Right ventricle myocardium inferior (tissue), 1 donor: ENCODE measurements at regions of chr1 and their contacts with region 1.

Region 1: DNA sequence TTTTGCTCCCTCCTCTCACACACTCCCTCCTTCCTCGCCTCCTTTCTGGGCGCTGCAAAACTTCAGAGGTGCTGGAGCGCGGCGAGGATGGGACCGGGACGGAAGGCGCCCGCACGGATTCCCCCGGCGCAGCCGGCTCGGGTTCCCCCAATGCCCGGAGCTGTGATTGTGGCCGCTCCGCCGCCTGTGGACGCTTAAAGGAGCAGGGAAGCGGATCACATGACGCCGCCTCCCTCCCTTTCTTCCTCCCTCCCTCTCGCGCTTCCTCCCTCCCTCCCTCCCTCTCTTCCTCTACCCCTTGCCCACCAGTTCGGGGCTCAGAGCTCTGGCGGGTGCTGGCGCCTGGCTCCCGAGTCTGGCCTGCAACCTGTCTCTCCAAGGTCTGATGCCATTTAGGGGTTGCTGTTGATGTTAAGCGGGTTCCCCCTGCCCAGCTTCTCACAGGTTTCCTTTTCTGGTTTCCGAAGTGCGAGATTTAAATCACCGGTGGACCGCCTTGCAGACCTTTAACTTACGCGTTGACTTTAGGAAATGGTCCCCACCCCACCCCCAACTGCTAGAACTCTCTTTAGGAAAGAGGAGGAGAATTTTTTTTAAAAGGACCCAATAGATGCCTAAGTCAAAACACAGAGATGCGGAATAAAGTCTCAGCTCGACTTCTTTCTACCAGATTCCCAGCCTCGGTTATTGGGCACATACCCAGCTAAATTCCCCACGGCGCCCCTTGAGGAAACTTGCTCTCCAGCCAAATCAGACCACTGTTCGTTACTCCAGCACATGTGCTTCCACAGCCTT is at the start of gene WLS:
- DNase-seq: peak; percentile 92
- ATAC-seq: peak; percentile 91
- total RNA-seq, gene WLS: 97.2 TPM

Region 2: DNA sequence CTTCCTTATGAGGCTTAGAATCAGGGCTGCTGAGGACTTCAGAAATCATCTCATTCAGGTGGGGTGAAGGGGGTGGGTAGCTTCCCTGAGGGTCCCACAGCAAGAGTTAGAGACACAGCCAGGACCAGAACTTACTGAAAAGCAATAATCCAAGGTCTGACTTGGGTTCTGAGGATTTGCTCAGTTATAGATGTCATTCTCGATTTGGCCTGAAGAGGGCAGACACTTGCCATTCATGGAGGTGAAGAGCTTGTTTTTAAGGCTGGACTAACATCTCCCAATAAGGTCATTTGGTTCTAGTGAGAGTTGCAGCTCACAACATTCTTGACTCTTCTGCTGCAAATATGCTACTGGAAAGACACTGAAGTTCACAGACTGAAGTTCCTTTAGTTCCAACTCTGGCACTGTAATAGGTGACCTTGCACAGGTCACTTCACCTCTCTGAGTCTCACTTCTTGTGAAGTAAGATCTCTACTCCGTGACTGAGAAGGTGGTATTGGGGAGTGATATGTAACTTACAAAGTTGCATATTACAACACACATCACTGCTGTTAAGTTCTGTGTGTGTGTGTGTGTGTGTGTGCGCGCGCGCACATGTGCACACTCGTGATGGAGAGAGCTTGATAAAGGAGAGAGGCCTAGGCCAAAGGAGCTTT is 112.3 kb before region 1 on chr1:
- intact Hi-C with region 1: loop called (anchors 5 kb)
- DNase-seq: no peak
- ATAC-seq: peak; percentile 40

Region 3: DNA sequence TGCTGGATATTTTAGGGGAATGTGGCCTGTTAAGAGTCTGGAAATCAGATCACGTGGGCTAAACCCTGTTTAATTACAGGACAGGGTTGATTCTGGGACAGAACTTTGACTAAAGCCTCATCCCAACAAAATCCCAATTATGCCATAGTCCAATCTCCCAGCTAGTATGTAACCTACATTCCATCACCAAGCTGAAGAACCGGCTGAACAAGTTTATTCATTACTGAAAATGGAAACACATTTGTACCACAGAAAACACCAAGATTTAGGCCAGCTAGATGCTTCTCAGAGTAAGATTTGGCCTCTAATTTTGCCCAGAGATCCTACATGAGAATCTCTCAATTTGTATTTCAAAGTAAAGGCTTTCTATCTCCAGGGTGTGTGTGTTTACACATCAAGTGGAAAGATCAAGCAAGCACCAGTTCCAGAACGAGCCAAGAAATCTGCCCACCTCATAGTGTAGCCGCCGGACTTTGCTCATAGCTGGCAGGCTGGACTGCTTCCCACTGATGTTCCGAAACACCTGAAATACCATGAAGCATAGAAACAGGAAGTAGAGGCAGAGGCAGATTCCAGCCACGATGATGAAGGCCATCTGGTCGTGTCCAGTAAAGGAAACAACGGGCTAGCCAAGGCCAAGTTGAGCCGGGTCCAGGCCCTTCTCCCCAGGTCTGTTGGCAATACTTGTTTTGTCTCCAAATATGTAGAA is 87.0 kb before region 1 on chr1:
- intact Hi-C with region 1: loop called (anchors 5 kb)
- DNase-seq: no peak
- ATAC-seq: no peak

Region 4: GRCh38 chr1:68173911-68174737 is 58.4 kb before region 1 on chr1:
- intact Hi-C with region 1: loop called (anchors 2 kb)
- DNase-seq: no peak
- ATAC-seq: peak; percentile 63

Region 5: DNA sequence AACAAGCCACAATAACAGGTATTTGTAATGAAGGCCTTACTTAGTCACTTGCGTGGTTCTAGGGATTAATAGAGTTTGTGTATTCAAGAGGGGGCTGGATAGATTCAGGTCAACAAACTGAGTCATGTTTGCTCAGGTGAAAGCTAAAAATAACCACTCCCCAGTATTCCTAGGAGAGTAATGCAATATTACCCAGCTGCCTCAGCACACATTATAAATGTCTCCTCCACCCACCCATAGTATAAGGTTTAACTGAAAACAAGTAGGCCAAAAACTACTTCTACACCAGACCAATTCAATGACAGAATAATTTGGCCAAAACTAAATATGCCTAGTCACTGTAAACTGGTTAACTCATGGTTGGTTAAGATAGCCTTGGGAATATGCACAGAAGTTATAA is 34.7 kb before region 1 on chr1:
- intact Hi-C with region 1: loop called (anchors 1 kb)
- DNase-seq: no peak
- ATAC-seq: no peak

Region 6: DNA sequence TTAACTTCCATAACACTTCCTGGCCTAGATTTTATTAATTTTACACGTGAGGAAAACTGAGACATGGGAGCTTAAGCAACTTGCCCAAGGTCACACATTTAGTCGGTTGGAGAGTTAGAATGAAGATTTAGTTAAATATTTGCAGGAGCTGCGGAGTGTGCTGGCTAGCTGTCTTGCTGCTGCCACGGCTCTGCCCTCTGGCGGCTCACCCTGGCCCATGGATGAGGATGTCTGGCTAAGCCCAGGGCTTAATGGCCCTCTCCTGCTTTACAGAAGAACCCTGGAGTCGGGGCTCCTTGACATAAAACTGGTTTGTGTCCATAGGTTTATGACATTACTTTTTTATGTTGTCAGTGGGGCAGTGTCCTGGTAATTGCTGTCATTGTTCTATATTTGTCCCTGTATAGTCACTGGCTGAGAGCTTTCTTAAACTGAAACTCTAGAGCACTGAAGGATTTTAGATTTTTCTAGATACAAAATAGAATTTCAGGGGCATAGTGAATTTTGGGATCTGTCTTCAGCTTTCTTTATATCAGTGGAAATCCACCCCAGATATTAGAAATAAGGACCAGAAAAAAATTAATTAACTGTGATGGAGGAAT is 88.6 kb after region 1 on chr1:
- intact Hi-C with region 1: loop called (anchors 5 kb)
- DNase-seq: peak; percentile 72
- ATAC-seq: peak; percentile 89